ENCODE measurements at regions of chr21 and their contacts with region 1.

Region 1: DNA sequence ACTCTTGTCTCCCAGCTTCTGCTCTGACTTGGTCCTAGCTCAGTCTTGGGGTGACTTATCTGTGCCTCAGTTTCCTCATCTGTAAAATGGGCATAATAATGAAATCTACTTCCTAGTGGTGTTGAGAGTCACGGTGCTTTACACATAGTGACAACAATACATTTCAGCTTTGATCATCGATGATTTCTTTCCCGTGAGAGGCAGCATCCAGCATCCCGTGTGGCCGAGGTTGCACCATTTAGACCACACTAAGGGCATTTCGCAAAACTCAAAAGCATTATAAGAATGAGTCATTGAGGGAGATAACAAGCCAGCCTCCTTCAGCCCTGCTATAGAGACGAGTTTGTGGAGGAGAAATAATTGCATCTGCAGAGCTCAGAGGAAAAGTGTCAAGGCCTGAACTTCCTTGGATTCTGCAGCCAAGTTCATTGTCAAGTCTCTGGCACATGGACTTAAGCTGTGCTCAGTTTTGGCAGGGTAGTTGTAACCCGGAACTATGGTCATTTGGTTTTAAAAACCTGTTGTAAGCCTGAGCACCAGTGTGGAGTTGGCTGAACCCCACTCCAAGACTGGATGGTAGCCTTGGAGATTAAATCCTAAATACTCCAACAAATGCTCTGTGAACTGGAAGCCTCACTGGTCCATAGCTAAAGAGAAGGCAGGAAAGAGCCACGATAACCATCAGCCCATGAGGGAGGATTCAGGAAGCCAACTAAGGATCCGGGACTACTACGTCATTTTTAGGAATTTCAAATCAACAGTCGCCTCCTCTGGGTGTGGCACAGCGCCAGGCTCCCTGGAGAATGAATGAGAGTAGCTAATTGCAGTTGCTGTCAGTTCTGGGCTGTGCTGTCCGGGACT is 64.2 kb downstream of the TCP10L start:
- DNase-seq: peak in 8 of 10 donors; percentile 49 to 73 (median 58)
- H3K4me3 ChIP-seq: peak overlapping the region in 2 of 59 donors; percentile 8 to 10
- H3K27ac ChIP-seq: peak overlapping the region in 33 of 59 donors; percentile 2 to 73 (median 45)
- H3K27me3 ChIP-seq: no peaks in the 10 kb centered on the region
- CTCF ChIP-seq: no peak

Region 2: DNA sequence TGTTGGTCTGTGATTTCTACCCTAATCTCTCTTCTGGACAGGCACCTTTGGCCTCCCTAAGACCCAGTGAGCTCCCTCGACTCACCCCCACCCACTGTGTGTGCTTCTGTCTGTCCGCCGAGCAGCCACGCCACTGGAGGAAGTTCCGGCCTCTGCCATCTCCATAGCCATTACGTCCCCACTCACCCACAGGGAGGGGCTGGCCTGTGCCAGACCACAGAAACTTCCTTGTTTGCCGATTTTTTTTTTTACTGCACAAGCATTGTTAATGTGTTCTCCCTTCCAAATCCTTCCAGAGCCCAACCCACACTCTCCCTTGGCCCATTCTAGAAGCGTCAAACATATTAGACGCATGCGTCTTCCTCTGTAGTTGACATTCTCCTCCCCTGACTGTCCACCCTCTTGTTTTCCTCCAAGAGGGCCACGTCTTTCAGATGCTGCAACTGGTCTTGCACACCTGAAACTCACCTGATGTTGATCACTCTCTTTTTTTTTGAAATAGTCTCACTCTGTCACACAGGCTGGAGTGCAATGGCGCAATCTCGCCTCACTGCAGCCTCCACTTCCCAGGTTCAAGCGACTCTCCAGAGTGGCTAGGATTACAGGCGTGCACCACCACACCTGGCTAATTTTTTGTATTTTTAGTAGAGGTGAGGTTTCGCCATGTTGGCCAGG is 36.3 kb before region 1 on chr21:
- intact Hi-C with region 1: loop called in 1 of 2 experiments (anchors 5 kb)
- DNase-seq: peak in 9 of 10 donors; percentile 47 to 76 (median 61)
- H3K4me3 ChIP-seq: peak overlapping the region in 3 of 59 donors; percentile 7 to 16 (median 9)
- H3K27ac ChIP-seq: peak overlapping the region in 48 of 59 donors; percentile 5 to 84 (median 60)
- H3K27me3 ChIP-seq: no peaks in the 10 kb centered on the region
- CTCF ChIP-seq: peak in 1 of 56 donors; percentile 14

Region 3: GRCh38 chr21:32569261-32570230 is 48.4 kb after region 1 on chr21:
- intact Hi-C with region 1: loop called in 1 of 2 experiments (anchors 5 kb)
- DNase-seq: peak in 9 of 10 donors; percentile 47 to 76 (median 68)
- H3K4me3 ChIP-seq: peak overlapping the region; percentile 49 to 88 (median 64)
- H3K27ac ChIP-seq: peak overlapping the region in 40 of 59 donors; percentile 20 to 86 (median 57)
- H3K27me3 ChIP-seq: no peaks in the 10 kb centered on the region
- CTCF ChIP-seq: peak; percentile 58 to 91 (median 80)

Measured in dorsolateral prefrontal cortex (tissue), 120 donors.